Activated CD8-positive, alpha-beta T cell treated with anti-CD3 and anti-CD28 coated beads, Interleukin-2, amount 10 ng/mL, durations not matched to agents 7 days and 5 days (primary cell): ENCODE measurements at regions of chr17 and their contacts with region 1.

Region 1: DNA sequence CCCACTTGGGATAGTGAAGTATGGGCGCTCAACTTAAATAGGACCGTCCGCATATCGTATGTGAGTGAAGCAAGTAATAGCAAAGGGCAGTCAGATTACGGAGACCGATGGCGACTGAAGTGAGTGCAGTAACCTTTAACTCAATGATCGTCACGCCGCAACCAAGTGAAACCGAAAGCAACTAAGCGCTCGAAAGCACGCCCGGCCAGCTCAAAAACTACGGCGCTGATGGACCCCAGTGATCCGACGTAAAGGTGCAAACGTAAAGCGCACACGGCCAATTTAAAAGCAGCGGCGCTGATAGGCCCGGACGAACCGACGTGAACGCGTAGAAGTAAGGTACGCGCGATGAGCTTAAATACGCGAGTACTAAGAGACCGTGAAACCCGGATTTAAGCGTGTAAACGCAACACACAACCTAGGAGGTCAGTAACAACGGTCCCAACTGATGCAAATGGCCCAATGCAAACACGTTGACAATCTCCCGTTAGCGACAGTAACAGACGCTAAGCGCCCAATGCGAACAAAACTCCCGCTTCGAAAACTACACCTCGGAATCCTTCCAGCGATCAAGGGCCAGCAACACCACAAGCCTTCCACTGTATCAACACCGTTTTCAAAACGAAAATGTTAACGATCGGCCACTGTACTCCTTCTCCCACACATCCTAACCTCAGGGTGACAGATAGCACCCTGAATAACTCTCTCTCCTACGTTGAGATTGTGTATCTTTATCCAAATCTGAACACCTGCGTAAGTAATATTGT is 37.9 kb upstream of the ARL4D start:
- DNase-seq: peak; percentile 97
- ATAC-seq: peak; percentile 83
- H3K4me3 Mint-ChIP-seq: peak overlapping the region; percentile 91
- H3K27ac Mint-ChIP-seq: peak overlapping the region; percentile 100
- H3K4me1 Mint-ChIP-seq: peaks cover 40% of the 10 kb centered on the region
- H3K27me3 Mint-ChIP-seq: no peaks in the 10 kb centered on the region

Region 2: GRCh38 chr17:43170766-43171585 is 189.9 kb before region 1 on chr17 and contains the start of gene NBR1:
- CTCF ChIA-PET with region 1: no interaction called
- POLR2A ChIA-PET with region 1: interaction called, 11 read pairs
- DNase-seq: peak; percentile 98
- ATAC-seq: peak; percentile 88
- H3K4me3 Mint-ChIP-seq: no peak within 1 kb of the TSS
- H3K27ac Mint-ChIP-seq: no peak within 1 kb of the TSS
- H3K4me1 Mint-ChIP-seq: peaks cover 35% of the 10 kb centered on the region
- H3K27me3 Mint-ChIP-seq: no peaks in the 10 kb centered on the region
- total RNA-seq, gene NBR1: 40.9 to 41.3 TPM

Region 3: GRCh38 chr17:43338886-43339516 is 21.9 kb before region 1 on chr17:
- CTCF ChIA-PET with region 1: interaction called, 35 read pairs
- POLR2A ChIA-PET with region 1: interaction called, 54 read pairs
- DNase-seq: peak; percentile 73
- ATAC-seq: no peak
- H3K4me3 Mint-ChIP-seq: no peak overlapping the region
- H3K27ac Mint-ChIP-seq: no peak overlapping the region
- H3K4me1 Mint-ChIP-seq: peaks cover 15% of the 10 kb centered on the region
- H3K27me3 Mint-ChIP-seq: peaks cover 12% of the 10 kb centered on the region

Region 4: GRCh38 chr17:43377056-43377810 is 16.3 kb after region 1 on chr17:
- CTCF ChIA-PET with region 1: no interaction called
- POLR2A ChIA-PET with region 1: interaction called, 189 read pairs
- DNase-seq: no peak
- ATAC-seq: no peak
- H3K4me3 Mint-ChIP-seq: no peak overlapping the region
- H3K27ac Mint-ChIP-seq: no peak overlapping the region
- H3K4me1 Mint-ChIP-seq: peaks cover 11% of the 10 kb centered on the region
- H3K27me3 Mint-ChIP-seq: no peaks in the 10 kb centered on the region

Region 5: GRCh38 chr17:43393944-43394482 is 33.1 kb after region 1 on chr17:
- CTCF ChIA-PET with region 1: interaction called, 12 read pairs
- POLR2A ChIA-PET with region 1: interaction called, 151 read pairs
- DNase-seq: peak; percentile 95
- ATAC-seq: peak; percentile 61
- H3K4me3 Mint-ChIP-seq: no peak overlapping the region
- H3K27ac Mint-ChIP-seq: peak overlapping the region; percentile 10
- H3K4me1 Mint-ChIP-seq: peaks cover 47% of the 10 kb centered on the region
- H3K27me3 Mint-ChIP-seq: no peaks in the 10 kb centered on the region

Region 6: DNA sequence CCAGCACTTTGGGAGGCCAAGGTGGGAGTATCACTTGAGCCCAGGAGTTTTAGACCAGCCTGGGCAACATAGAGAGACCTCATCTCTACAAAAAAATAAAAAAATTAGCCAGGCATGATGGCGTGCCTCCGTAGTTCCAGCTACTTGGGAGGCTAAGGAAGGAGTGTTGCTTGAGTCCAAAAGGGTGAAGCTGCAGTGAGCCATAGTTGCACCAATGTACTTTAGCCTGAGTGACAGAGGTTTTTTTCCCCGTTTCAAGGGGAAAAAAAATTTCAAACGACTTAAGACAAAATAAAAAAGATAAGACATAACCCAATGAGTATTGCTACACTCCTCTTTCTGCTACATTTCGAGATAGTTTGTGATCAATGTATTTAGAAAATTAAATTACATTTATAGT is 129.7 kb after region 1 on chr17:
- CTCF ChIA-PET with region 1: no interaction called
- POLR2A ChIA-PET with region 1: no interaction called
- DNase-seq: no peak
- ATAC-seq: no peak
- H3K4me3 Mint-ChIP-seq: no peak overlapping the region
- H3K27ac Mint-ChIP-seq: no peak overlapping the region
- H3K4me1 Mint-ChIP-seq: peaks cover 10% of the 10 kb centered on the region
- H3K27me3 Mint-ChIP-seq: no peaks in the 10 kb centered on the region